WTC11 (cell line): ENCODE measurements at regions of chr12 and their contacts with region 1.

Region 1: DNA sequence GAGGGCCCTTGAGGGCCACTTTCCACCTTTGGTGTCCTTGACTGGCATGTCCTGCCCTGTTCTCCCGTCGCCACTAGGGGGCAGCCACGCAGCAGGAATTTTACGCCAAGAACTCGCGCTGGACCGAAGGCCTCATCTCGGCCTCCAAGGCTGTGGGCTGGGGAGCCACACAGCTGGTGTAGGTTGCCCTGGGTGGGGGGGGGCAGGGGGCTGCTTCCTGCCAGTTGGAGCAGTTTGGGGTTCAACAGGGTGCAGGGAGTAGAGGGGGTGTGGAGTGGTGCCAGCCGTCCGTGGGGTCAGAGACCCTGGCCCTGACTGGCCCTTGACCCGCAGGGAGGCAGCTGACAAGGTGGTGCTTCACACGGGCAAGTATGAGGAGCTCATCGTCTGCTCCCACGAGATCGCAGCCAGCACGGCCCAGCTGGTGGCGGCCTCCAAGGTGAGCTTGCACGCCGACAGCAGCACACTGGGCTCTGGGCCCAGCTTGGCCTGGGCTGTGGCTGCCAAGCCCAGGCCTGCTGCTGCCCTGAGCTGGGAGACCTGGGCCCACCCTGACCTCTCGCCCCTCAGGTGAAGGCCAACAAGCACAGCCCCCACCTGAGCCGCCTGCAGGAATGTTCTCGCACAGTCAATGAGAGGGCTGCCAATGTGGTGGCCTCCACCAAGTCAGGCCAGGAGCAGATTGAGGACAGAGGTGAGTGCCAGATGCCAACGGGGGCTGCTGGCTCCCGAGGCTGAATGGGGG is 25.3 kb downstream of the HIP1R start:
- DNase-seq: peak; percentile 89
- ATAC-seq: peak; percentile 76
- H3K4me3 Mint-ChIP-seq: no peak overlapping the region
- H3K27ac Mint-ChIP-seq: no peak overlapping the region
- H3K4me1 Mint-ChIP-seq: no peaks in the 10 kb centered on the region
- H3K27me3 Mint-ChIP-seq: peaks cover 13% of the 10 kb centered on the region
- CTCF ChIP-seq: peak; percentile 96

Region 2: GRCh38 chr12:122413516-122414404 is 446.8 kb before region 1 on chr12:
- CTCF ChIA-PET with region 1: no interaction called
- POLR2A ChIA-PET with region 1: no interaction called
- DNase-seq: no peak
- ATAC-seq: no peak
- H3K4me3 Mint-ChIP-seq: no peak overlapping the region
- H3K27ac Mint-ChIP-seq: no peak overlapping the region; the same call in 1 of the 2 replicates
- H3K4me1 Mint-ChIP-seq: peaks cover 10% of the 10 kb centered on the region
- H3K27me3 Mint-ChIP-seq: no peaks in the 10 kb centered on the region
- CTCF ChIP-seq: no peak

Region 3: DNA sequence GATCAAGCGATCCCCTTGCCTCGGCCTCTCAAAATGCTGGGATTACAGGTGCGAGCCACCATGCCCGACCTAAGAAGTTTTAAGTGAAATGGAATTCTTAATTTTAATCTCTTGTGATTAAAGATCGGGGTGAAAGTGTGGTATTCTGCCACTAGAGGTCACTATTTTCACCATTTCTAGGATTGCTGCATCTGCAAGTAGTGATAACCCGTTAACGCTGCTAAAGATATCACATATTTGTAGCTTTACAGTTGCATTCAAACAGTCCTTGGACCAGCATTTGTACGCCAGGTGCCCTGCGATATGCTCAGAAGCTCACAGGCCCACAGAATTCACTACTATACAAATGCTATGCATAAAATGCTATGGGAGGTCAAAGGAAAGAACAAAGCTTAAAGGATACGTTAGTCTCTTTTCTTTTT is 66.8 kb before region 1 on chr12:
- CTCF ChIA-PET with region 1: interaction called, 26 read pairs
- POLR2A ChIA-PET with region 1: no interaction called
- DNase-seq: no peak
- ATAC-seq: peak; percentile 55
- H3K4me3 Mint-ChIP-seq: no peak overlapping the region
- H3K27ac Mint-ChIP-seq: no peak overlapping the region
- H3K4me1 Mint-ChIP-seq: peaks cover 3% of the 10 kb centered on the region
- H3K27me3 Mint-ChIP-seq: no peaks in the 10 kb centered on the region
- CTCF ChIP-seq: peak; percentile 72

Region 4: DNA sequence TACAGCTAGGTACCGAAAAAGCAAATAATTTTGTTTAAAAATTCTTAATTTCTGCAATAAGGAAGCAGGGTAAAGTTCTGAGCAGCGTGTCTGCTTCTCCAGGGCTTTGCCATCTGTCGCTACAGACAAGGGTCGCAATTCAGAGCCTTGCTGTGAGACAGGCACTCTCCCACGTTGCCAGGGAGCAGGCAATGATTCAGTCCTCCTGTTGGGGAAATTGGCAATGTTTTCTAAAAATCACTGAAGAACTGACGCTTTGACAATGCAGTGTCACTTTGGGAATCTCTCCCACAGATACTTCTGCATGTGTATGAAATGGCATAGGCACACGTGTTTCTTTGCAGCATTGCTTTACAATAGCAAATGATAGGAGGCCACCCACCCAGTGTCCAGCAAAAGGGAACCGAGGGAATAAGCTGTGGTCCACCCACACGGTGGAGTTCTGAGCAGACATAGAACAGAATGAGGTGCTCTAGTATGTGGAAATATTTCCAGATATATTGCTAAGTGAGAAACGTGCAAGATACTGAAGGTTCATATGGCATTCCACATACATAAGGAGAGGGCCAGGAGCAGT is 41.2 kb before region 1 on chr12:
- CTCF ChIA-PET with region 1: no interaction called
- POLR2A ChIA-PET with region 1: no interaction called
- DNase-seq: no peak
- ATAC-seq: no peak
- H3K4me3 Mint-ChIP-seq: no peak overlapping the region
- H3K27ac Mint-ChIP-seq: no peak overlapping the region
- H3K4me1 Mint-ChIP-seq: no peaks in the 10 kb centered on the region
- H3K27me3 Mint-ChIP-seq: peaks cover 3% of the 10 kb centered on the region; the same call in 1 of the 2 replicates
- CTCF ChIP-seq: no peak

Region 5: GRCh38 chr12:122834104-122834920 is 26.2 kb before region 1 on chr12:
- CTCF ChIA-PET with region 1: interaction called, 10 read pairs
- POLR2A ChIA-PET with region 1: no interaction called
- DNase-seq: peak; percentile 78
- ATAC-seq: peak; percentile 75
- H3K4me3 Mint-ChIP-seq: peak overlapping the region; percentile 86
- H3K27ac Mint-ChIP-seq: peak overlapping the region; percentile 80
- H3K4me1 Mint-ChIP-seq: peaks cover 30% of the 10 kb centered on the region
- H3K27me3 Mint-ChIP-seq: peaks cover 58% of the 10 kb centered on the region
- CTCF ChIP-seq: no peak

Region 6: DNA sequence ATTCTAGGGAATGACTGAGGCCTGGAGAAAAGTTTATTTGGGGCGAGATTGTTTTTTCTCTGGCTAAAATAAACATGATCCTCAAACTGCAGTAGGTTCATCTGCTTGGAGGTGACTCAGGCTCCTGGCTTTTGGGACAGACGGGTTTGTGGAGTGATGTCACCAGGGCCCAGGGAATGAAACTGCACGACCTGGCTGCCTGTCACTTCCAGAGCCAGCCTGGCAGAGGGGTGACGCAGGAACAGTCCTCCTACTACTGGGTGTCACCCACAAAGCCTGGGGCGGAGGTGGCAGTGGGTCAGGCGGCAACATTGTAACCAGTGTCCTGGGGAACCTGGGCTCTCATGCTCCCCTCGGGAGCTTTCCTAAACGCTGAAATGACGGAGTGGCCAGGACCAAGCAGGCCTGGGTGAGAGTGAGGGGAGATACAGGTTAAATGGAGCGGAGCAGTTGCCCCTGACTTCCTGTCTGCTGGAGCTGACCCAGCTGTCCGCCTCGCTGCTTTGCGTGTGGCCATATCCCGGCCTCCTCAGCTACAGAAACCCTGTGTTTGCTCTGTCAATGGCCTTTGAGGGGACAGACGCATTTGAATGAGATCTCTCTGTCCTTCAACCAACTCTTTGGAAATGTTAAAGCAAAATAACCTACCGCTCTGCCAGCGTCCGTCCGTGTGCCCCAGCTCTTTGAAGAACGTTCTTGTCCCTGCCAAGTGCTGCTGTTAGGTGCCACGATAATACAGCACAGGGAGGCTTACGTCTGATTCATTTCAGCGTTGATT is 18.8 kb before region 1 on chr12:
- CTCF ChIA-PET with region 1: interaction called, 19 read pairs
- POLR2A ChIA-PET with region 1: no interaction called
- DNase-seq: no peak
- ATAC-seq: peak; percentile 36
- H3K4me3 Mint-ChIP-seq: no peak overlapping the region
- H3K27ac Mint-ChIP-seq: peak overlapping the region; percentile 76
- H3K4me1 Mint-ChIP-seq: peaks cover 33% of the 10 kb centered on the region
- H3K27me3 Mint-ChIP-seq: peaks cover 28% of the 10 kb centered on the region
- CTCF ChIP-seq: no peak

Region 7: GRCh38 chr12:122871851-122872780 is 11.6 kb after region 1 on chr12:
- CTCF ChIA-PET with region 1: interaction called, 20 read pairs
- POLR2A ChIA-PET with region 1: no interaction called
- DNase-seq: peak; percentile 99
- ATAC-seq: peak; percentile 74
- H3K4me3 Mint-ChIP-seq: 0 out of 2 replicates have a peak overlapping the region, but pooled peaks have one; percentile 26
- H3K27ac Mint-ChIP-seq: peak overlapping the region; percentile 64
- H3K4me1 Mint-ChIP-seq: peaks cover 36% of the 10 kb centered on the region
- H3K27me3 Mint-ChIP-seq: peaks cover 99% of the 10 kb centered on the region
- CTCF ChIP-seq: no peak

Region 8: DNA sequence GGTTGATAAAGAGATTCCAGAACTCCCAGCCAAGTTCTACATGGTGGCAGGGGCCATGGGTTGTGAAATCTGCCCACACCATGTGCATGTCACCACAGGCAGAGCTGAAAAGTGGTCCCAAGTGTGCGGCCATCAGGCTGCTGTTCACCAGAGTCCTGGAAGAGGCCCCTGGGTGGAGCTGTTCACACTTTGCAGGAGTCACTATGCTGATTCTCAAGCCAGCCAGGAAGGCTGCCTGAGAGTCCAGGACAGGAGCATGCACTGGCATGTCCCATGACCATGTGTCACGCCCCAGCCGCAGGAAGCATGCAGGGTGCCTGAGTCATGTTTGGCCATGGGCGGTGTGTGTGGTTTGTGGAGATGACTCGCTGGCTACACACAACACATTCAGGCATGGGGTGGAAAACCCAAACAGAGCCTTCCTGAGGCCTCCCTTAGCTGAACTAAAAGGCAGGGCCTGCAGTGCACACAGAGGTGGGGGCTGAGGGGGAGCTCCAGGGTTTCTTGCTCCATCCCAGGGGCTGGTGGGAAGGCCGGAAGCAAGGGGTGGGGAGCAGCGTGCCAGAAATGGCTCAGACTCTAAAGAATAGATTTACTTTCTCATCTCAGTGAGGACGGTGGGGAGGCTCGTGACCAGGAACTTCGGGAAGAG is 86.3 kb after region 1 on chr12:
- CTCF ChIA-PET with region 1: interaction called, 67 read pairs
- POLR2A ChIA-PET with region 1: no interaction called
- DNase-seq: no peak
- ATAC-seq: peak; percentile 18; the same call in 1 of the 2 replicates
- H3K4me3 Mint-ChIP-seq: no peak overlapping the region
- H3K27ac Mint-ChIP-seq: no peak overlapping the region
- H3K4me1 Mint-ChIP-seq: no peaks in the 10 kb centered on the region
- H3K27me3 Mint-ChIP-seq: no peaks in the 10 kb centered on the region
- CTCF ChIP-seq: no peak

Region 9: DNA sequence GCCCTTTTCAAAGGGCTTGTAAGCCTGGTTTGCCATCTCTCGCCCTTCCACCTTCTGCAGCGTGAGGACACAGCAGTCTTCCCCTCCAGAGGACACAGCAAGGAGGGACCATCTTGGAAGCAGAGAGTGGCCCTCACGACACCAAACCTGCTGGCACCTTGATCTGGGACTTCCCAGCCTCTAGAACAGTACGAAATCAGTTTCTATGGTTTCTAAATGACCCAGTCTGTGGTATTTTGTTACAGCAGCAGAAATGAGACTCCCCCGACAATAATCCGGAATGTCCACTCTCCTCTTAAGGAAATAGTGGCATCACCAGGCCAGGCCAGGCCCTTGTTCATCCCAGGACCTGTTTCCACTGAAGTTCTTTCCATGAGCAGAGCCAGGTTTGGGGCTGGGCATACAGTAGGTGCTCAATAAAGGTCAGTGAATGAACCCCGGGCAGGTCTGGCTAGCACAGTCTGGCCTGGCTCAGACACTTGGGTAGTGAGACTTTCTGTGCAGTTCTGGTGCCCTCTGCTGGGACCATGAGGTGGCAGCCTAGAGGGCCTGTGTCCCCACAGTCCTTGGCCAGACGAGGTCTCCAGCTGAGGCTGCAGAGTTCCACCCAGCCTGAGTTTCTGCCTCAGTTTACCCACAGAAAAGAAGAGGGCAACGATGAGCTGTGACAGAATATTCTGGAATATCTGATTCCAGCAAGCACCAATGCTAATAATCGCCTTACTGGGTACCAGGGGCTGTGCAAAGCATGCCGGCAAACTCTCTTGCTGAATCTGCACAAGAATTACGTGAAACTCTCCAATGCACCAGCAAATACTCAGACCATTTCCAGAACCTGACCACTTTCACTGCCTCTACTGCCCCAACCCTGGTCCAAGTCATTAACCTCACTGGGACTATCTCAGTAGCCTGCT is 91.7 kb after region 1 on chr12:
- CTCF ChIA-PET with region 1: interaction called, 67 read pairs
- POLR2A ChIA-PET with region 1: no interaction called
- DNase-seq: peak; percentile 75
- ATAC-seq: peak; percentile 97
- H3K4me3 Mint-ChIP-seq: no peak overlapping the region
- H3K27ac Mint-ChIP-seq: no peak overlapping the region
- H3K4me1 Mint-ChIP-seq: no peaks in the 10 kb centered on the region
- H3K27me3 Mint-ChIP-seq: no peaks in the 10 kb centered on the region
- CTCF ChIP-seq: peak; percentile 37; the same call in 1 of the 2 replicates